PC-9 (cell line): ENCODE measurements at regions of chr21 and their contacts with region 1.

Region 1: DNA sequence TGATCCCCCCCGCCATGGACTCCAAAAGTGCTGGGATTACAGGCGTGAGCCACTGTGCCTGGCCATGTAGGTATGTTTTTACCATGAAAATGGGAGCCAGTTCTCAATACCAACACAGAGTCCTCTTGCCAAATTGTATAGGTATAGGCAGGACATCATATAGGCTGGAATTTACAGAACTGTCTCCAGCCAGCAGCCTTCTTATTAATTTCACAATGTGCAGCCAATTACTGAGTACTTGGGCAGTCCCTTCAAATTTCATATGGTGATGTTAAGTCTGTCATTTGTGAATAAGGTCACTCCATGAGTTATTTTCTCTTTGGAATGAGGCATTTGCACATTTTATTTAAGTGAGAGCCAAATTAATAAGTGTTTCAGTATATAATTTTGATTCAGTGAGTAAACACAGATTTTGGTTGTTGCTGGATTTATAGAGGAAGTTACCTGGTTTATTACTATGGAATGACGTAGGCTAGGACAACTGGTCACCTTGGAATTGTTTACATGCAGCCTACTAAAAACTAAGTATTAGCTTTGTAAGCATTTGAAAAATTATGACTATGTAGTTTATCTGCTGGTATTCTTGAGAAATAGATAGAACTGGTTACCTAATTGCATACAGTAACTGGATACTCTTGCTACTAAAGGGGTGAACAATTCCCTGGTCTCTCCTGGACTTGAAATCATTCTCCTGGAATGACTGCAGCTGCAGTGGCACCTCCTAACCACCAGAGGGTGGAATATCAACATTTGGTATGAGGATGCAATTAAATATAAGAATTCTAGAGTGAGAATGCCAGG is 3.1 kb upstream of the KRTAP27-1 start:
- DNase-seq: no peak
- H3K4me3 ChIP-seq: no peak overlapping the region
- H3K27ac ChIP-seq: no peak overlapping the region
- H3K4me1 ChIP-seq: peaks cover 8% of the 10 kb centered on the region
- H3K27me3 ChIP-seq: no peaks in the 10 kb centered on the region
- CTCF ChIP-seq: peak; percentile 89

Region 2: DNA sequence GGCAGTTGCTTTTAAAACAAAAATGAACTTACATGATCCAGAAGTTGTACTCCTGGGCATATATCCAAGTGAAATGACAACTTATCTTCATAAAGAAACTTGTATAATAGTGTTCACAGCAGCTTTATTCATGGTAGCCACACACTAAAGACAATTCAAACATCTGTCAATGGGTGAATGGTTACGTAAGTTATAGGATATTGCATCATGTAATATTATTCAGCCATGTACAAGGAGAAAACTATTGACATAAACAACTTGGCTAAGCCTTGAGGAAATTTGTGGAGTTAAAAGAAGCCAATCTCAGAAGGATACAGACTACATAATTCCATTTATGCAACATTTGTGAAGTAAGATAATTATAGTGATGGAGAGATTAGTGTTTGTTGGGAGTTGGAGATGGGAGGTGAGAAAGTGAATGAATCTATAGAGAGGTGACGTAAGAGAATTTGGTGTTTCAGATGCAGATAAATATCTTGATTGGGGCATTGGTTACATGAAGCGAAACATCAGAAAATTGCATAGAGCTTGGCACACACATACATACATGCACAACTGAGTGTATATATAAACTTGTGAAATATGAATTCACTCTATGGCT is 350.9 kb before region 1 on chr21:
- CTCF ChIA-PET with region 1: no interaction called
- POLR2A ChIA-PET with region 1: interaction called, 10 read pairs
- intact Hi-C with region 1: no loop called
- DNase-seq: no peak
- H3K4me3 ChIP-seq: no peak overlapping the region
- H3K27ac ChIP-seq: no peak overlapping the region
- H3K4me1 ChIP-seq: no peaks in the 10 kb centered on the region
- H3K27me3 ChIP-seq: no peaks in the 10 kb centered on the region
- CTCF ChIP-seq: no peak

Region 3: DNA sequence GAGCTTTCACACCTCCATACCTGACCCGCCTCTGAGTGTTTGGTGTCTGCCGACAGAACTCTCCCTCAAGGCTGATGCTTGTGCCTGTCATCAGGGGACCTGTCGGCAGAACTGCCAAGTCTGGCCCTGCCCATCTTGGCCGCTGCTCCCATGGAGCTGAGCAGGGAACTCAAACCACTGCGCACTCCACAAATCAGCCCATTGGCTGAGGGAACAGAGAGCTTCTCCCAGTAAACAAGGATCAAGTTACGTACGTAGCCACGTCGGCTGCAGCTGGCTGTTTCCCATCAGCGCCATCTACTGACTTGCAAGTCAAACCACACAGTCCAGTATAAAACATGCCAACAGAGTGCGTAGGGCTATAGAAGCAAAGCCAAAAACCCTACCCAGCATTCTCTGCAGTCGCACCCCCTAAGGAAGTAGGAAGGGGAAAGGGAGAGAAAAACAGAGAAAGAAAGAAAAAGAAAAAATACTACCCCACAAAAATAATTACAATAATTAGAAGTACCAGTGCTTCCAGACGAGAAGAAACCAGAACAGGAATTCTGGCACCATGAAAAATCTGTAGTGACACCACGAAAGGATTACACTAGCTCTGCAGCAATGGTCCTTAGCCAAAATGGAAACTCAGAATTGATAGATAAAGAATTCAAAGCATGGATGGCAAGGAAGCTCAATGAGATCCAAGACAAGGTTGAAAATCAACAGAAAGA is 68.3 kb after region 1 on chr21:
- CTCF ChIA-PET with region 1: no interaction called
- POLR2A ChIA-PET with region 1: interaction called, 11 read pairs
- intact Hi-C with region 1: loop called (anchors 5 kb)
- DNase-seq: peak; percentile 46 to 49
- H3K4me3 ChIP-seq: no peak overlapping the region
- H3K27ac ChIP-seq: no peak overlapping the region
- H3K4me1 ChIP-seq: no peaks in the 10 kb centered on the region
- H3K27me3 ChIP-seq: no peaks in the 10 kb centered on the region
- CTCF ChIP-seq: peak; percentile 51; the same call in 1 of the 2 replicates